Sigmoid colon (tissue), 7 donors: ENCODE measurements at regions of chr20 and their contacts with region 1.

Region 1: GRCh38 chr20:407133-407952 is 756 bp upstream of the RBCK1 start:
- DNase-seq: peak; percentile 89
- H3K4me3 ChIP-seq: peak overlapping the region; percentile 32 to 99 (median 80)
- H3K27ac ChIP-seq: peak overlapping the region; percentile 88 to 96 (median 94)
- H3K4me1 ChIP-seq: peaks cover 0 to 33% (median 24%) of the 10 kb centered on the region in 4 donors
- H3K27me3 ChIP-seq: no peaks in the 10 kb centered on the region
- CTCF ChIP-seq: peak in 3 of 4 experiments; percentile 18 to 32 (median 19)
- EP300 ChIP-seq: no peak
- POLR2A ChIP-seq: no peak

Region 2: GRCh38 chr20:347640-348484 is 59.5 kb before region 1 on chr20:
- intact Hi-C with region 1: loop called (anchors 2 kb)
- DNase-seq: peak; percentile 98
- H3K4me3 ChIP-seq: peak overlapping the region; percentile 72 to 82 (median 79)
- H3K27ac ChIP-seq: peak overlapping the region; percentile 94 to 98 (median 96)
- H3K4me1 ChIP-seq: peaks cover 0 to 28% (median 19%) of the 10 kb centered on the region in 4 donors
- H3K27me3 ChIP-seq: no peaks in the 10 kb centered on the region
- CTCF ChIP-seq: no peak
- EP300 ChIP-seq: peak in 1 of 4 donors; percentile 46
- POLR2A ChIP-seq: peak; percentile 48

Region 3: DNA sequence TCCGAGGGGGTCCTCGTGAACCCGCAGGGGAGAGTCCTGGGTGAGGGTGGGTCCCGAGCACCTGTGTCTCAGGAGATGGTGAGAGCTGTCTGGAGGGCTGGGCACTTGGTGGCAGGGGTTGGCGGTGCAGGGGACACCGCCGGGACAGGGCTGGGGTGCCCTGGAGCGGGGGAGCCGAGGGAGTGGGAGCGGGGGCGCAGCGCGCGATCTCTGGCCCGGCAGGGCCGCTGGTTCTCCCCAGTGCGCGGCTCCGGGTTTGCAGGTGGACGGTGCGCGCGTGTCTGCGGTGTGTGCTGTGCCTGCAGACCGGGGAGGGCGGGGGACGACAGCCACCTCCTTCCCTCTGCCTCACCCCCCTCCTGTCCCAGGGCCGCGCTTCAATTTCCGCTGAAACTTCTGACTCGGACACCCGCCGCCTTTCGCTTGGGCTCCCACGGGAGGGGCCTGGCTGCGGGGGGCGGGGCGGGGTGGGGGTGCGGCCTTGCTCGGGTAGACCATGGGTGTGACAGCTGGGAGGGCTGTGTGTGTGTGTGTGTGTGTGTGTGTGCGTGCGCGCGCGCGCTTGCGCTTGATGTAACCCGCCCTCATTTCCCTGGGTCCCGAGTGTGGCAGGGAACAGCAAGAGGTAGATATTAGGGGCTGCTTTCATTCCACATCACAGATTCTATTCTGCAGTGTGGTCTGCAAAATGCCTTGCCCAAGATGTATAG is 25.6 kb before region 1 on chr20:
- intact Hi-C with region 1: no loop called
- DNase-seq: peak; percentile 83
- H3K4me3 ChIP-seq: peak overlapping the region; percentile 29 to 65 (median 56)
- H3K27ac ChIP-seq: peak overlapping the region in 3 of 4 donors; percentile 26 to 51 (median 37)
- H3K4me1 ChIP-seq: peaks cover 0 to 18% (median 15%) of the 10 kb centered on the region in 4 donors
- H3K27me3 ChIP-seq: peaks cover 10 to 44% (median 36%) of the 10 kb centered on the region in 3 donors
- CTCF ChIP-seq: no peak
- EP300 ChIP-seq: no peak
- POLR2A ChIP-seq: no peak

Region 4: GRCh38 chr20:462199-462991 is 55.1 kb after region 1 on chr20 and contains the start of gene TBC1D20:
- intact Hi-C with region 1: loop called (anchors 2 kb)
- DNase-seq: peak; percentile 92
- H3K4me3 ChIP-seq: peak within 1 kb of the TSS; percentile 67 to 90 (median 86)
- H3K27ac ChIP-seq: peak within 1 kb of the TSS; percentile 92 to 97 (median 96)
- H3K4me1 ChIP-seq: peaks cover 0 to 40% (median 37%) of the 10 kb centered on the region in 4 donors
- H3K27me3 ChIP-seq: no peaks in the 10 kb centered on the region
- CTCF ChIP-seq: no peak
- EP300 ChIP-seq: no peak
- POLR2A ChIP-seq: no peak
- total RNA-seq, gene TBC1D20: 32.6 to 42.9 (median 35.3) TPM

Region 5: GRCh38 chr20:483813-484644 is 76.7 kb after region 1 on chr20:
- intact Hi-C with region 1: loop called (anchors 5 kb)
- DNase-seq: no peak
- H3K4me3 ChIP-seq: no peak overlapping the region
- H3K27ac ChIP-seq: no peak overlapping the region
- H3K4me1 ChIP-seq: no peaks in the 10 kb centered on the region
- H3K27me3 ChIP-seq: no peaks in the 10 kb centered on the region
- CTCF ChIP-seq: no peak
- EP300 ChIP-seq: no peak
- POLR2A ChIP-seq: no peak

Region 6: GRCh38 chr20:653110-653589 is 245.8 kb after region 1 on chr20 and contains the start of gene SRXN1:
- intact Hi-C with region 1: loop called (anchors 2 kb)
- DNase-seq: peak; percentile 94
- H3K4me3 ChIP-seq: peak within 1 kb of the TSS; percentile 68 to 86 (median 76)
- H3K27ac ChIP-seq: peak within 1 kb of the TSS; percentile 84 to 90 (median 87)
- H3K4me1 ChIP-seq: peaks cover 0 to 22% (median 19%) of the 10 kb centered on the region in 4 donors
- H3K27me3 ChIP-seq: no peaks in the 10 kb centered on the region
- CTCF ChIP-seq: peak in 1 of 4 experiments; percentile 30
- EP300 ChIP-seq: no peak
- POLR2A ChIP-seq: no peak
- total RNA-seq, gene SRXN1: 16.8 to 32.4 (median 27.1) TPM